ENCODE measurements at regions of chrX and their contacts with region 1.

Region 1: DNA sequence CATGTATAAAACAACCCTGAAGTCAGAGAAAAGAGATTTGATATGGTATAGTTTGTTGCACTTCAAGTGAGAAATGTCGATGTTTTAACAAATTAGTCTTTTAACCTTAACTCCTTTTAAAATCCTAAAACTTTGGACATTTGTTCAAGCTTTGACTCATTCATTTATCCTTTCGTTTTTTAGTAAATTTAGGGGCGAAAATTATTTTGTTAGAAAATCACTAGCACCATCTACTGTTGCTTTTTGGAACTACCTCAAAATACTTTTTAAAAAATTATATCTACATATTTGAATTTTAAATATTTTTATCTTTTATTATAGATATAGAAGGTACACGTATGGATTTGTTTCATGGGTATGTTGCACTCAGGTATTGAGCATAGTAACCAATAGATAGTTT is 165.1 kb upstream of the POF1B start:
- DNase-seq: no peak
- H3K4me3 ChIP-seq: no peak overlapping the region
- CTCF ChIP-seq: no peak

Region 2: DNA sequence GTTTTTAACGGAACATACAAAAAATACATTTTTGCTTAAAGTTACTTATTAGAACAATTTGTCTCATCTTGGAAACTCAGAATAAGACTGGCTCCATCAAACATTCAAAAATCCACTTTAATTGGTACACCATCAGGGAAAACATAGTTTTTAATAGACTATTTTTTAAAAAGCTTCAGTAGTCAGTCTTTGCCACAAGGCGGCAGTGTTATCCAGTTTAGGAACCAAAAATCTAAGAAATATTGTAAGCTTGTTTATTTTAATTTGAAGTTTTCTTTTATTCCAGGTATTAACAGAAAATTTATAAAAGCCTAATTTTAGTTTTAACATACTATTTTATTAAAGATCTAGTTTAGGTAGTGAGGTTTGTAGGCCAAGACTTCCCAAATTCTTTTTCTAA is 433.3 kb before region 1 on chrX:
- CTCF ChIA-PET with region 1: interaction called, 26 read pairs
- POLR2A ChIA-PET with region 1: no interaction called
- DNase-seq: no peak
- H3K4me3 ChIP-seq: no peak overlapping the region
- CTCF ChIP-seq: peak; percentile 8

Region 3: DNA sequence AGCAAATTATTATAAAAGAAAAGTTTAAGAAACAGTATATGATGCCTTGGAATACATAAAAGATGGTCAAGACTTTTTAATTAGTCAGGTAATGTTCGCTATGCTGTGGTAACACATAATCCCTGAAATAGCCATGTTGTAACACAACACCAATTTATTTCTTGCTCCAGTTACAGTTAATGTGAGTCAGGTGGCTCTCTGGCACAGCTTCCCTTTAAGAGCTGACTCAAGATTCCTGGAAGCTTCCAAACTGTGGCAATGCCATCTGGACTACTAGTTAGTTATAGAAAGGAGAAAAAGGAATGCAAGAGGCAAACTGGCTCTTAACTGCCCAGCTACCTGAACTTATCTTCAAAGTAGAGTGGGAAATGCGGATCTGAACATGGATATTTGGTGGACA is 292.3 kb after region 1 on chrX:
- CTCF ChIA-PET with region 1: no interaction called
- POLR2A ChIA-PET with region 1: no interaction called
- DNase-seq: peak; percentile 0
- H3K4me3 ChIP-seq: no peak overlapping the region
- CTCF ChIP-seq: no peak